K562 (cell line): ENCODE measurements at regions of chrX and their contacts with region 1.

Region 1: GRCh38 chrX:57821703-57822375 is 88.4 kb downstream of the ZXDA start:
- DNase-seq: peak; percentile 15 to 52 (median 26)
- ATAC-seq: peak; percentile 80
- H3K4me3 ChIP-seq: no peak overlapping the region
- H3K27ac ChIP-seq: no peak overlapping the region
- H3K4me1 ChIP-seq: no peaks in the 10 kb centered on the region
- H3K27me3 ChIP-seq: no peaks in the 10 kb centered on the region
- CTCF ChIP-seq: peak; percentile 53 to 66 (median 58); a peak in 5 of 6 replicates
- EP300 ChIP-seq: no peak
- POLR2A ChIP-seq: no peak
- RAD21 ChIP-seq: peak; percentile 59 to 70

Region 2: DNA sequence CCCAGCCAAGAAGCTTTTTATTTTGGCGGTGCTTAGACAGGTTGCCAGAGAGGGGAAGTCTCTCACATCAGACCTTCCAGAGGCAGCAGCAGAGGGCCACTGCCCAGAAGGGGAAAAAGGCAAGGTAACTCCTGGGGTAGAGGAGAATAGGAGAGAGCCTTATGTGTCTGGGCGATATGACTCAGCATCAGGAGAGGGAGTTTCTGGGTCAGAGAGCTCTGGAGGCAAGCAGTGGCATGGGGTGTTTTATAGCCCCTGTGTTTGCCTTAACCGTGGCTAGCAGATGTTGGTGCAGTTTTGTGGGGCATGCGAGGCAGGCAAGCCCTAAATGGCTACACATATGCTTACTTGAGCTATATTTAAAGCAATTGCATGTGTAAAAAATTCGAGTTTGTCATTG is 238.4 kb before region 1 on chrX:
- CTCF ChIA-PET with region 1: no interaction called
- POLR2A ChIA-PET with region 1: no interaction called
- in situ Hi-C with region 1: no loop called
- intact Hi-C with region 1: loop called (anchors 5 kb)
- DNase-seq: peak in 1 of 4 experiments; percentile 6
- ATAC-seq: no peak
- H3K4me3 ChIP-seq: no peak overlapping the region
- H3K27ac ChIP-seq: no peak overlapping the region
- H3K4me1 ChIP-seq: no peaks in the 10 kb centered on the region
- H3K27me3 ChIP-seq: no peaks in the 10 kb centered on the region
- CTCF ChIP-seq: no peak
- EP300 ChIP-seq: no peak
- POLR2A ChIP-seq: no peak
- RAD21 ChIP-seq: no peak

Region 3: GRCh38 chrX:57667010-57667409 is 154.8 kb before region 1 on chrX:
- CTCF ChIA-PET with region 1: no interaction called
- POLR2A ChIA-PET with region 1: no interaction called
- in situ Hi-C with region 1: no loop called
- intact Hi-C with region 1: no loop called
- DNase-seq: no peak
- ATAC-seq: no peak
- H3K4me3 ChIP-seq: no peak overlapping the region
- H3K27ac ChIP-seq: no peak overlapping the region
- H3K4me1 ChIP-seq: no peaks in the 10 kb centered on the region
- H3K27me3 ChIP-seq: no peaks in the 10 kb centered on the region
- CTCF ChIP-seq: no peak
- EP300 ChIP-seq: no peak
- POLR2A ChIP-seq: no peak
- RAD21 ChIP-seq: no peak

Region 4: DNA sequence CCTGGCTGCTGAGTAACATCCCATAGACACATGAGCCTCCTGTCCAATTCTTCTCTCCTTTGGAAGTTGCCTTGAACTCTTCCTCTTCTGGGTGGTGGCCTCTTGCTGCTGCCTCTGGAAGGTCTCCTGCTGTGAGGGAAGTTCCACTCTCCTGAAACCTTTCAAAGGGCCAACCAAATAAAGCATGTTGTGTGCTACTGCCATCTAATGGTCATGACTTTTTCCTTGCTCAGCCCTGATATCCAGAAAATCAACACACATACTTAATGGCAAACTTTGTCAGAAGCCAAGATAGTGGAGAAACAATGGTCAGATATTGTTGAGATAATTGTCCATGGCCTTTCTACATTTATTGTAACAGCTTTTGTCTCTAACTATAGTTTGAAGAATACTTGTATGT is 107.5 kb after region 1 on chrX:
- CTCF ChIA-PET with region 1: no interaction called
- POLR2A ChIA-PET with region 1: no interaction called
- in situ Hi-C with region 1: no loop called
- intact Hi-C with region 1: loop called (anchors 1 kb)
- DNase-seq: peak in 1 of 4 experiments; percentile 11
- ATAC-seq: no peak
- H3K4me3 ChIP-seq: no peak overlapping the region
- H3K27ac ChIP-seq: no peak overlapping the region
- H3K4me1 ChIP-seq: no peaks in the 10 kb centered on the region
- H3K27me3 ChIP-seq: no peaks in the 10 kb centered on the region
- CTCF ChIP-seq: peak in 2 of 3 experiments; percentile 15 to 30; a peak in 2 of 6 replicates
- EP300 ChIP-seq: no peak
- POLR2A ChIP-seq: no peak
- RAD21 ChIP-seq: 0 out of 4 replicates have a peak, but pooled peaks of 1 of the 2 experiments have one; percentile 11

Region 5: GRCh38 chrX:58025979-58026378 is 204.1 kb after region 1 on chrX:
- CTCF ChIA-PET with region 1: interaction called, 3 read pairs
- POLR2A ChIA-PET with region 1: no interaction called
- in situ Hi-C with region 1: no loop called
- intact Hi-C with region 1: loop called (anchors 5 kb)
- DNase-seq: peak; percentile 5 to 24 (median 6)
- ATAC-seq: no peak; the same call in 2 of the 3 replicates
- H3K4me3 ChIP-seq: no peak overlapping the region
- H3K27ac ChIP-seq: no peak overlapping the region
- H3K4me1 ChIP-seq: no peaks in the 10 kb centered on the region
- H3K27me3 ChIP-seq: no peaks in the 10 kb centered on the region
- CTCF ChIP-seq: peak in 2 of 3 experiments; percentile 35 to 38; a peak in 2 of 6 replicates
- EP300 ChIP-seq: no peak
- POLR2A ChIP-seq: no peak
- RAD21 ChIP-seq: peak in 1 of 2 experiments; percentile 23; a peak in 1 of 4 replicates